ENCODE measurements at regions of chr11 and their contacts with region 1.

Region 1: DNA sequence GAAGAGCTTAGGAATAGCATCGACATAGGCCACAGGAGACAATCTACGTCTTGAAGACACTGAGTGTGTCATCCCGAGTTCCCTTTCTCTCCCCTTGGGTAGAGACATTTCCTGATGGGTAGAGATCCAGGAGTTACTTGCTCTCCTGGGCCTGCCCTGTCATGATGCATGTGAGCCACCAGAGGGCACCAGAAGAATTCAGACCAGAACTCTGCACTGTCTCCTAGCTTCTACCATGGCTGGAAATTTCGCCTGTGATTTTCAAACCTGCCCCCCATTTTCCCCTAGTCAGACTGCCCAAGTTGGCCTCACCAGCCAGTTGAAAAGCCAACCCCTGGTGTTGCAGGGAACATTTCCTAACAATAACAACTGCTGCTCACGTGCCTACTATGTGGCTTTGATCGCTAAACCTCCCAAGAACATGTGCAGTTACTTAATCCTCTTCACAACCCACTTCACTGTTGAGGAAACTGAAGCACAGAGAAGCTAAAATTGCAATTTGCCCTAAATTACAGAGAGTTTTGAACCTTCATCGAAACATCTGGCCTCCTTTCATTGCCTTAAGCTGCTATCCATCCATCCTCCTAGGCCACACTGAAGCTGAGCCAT is 47.2 kb downstream of the C11orf58 start:
- DNase-seq: peak; percentile 72
- H3K4me3 ChIP-seq: no peak overlapping the region
- H3K27ac ChIP-seq: no peak overlapping the region
- H3K4me1 ChIP-seq: no peaks in the 10 kb centered on the region
- H3K27me3 ChIP-seq: no peaks in the 10 kb centered on the region
- CTCF ChIP-seq: peak; percentile 80

Region 2: GRCh38 chr11:15650105-15650938 is 1135.3 kb before region 1 on chr11:
- CTCF ChIA-PET with region 1: no interaction called
- POLR2A ChIA-PET with region 1: no interaction called
- intact Hi-C with region 1: no loop called
- DNase-seq: peak; percentile 92
- H3K4me3 ChIP-seq: peak overlapping the region; percentile 45
- H3K27ac ChIP-seq: peak overlapping the region; percentile 75
- H3K4me1 ChIP-seq: peaks cover 7% of the 10 kb centered on the region
- H3K27me3 ChIP-seq: no peaks in the 10 kb centered on the region
- CTCF ChIP-seq: peak; percentile 93

Region 3: DNA sequence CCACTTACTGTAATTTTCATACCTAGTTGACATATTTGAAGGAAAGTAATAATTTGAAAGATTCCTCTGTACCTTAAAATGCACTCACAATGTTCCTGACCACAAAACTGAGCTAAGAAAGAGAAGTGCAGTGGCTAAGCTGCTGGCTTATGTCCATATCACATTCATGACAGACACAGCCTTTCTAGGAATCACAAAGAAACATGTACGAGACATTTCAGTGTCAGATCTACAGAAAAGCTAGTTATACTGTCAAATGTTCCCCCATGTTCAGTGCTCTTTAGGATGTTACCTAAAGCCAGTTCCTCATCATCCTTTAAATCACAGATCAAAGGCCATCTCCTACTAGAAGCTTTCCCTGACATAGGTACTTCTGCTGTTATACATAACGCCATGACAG is 189.4 kb before region 1 on chr11:
- CTCF ChIA-PET with region 1: no interaction called
- POLR2A ChIA-PET with region 1: interaction called, 12 read pairs
- intact Hi-C with region 1: no loop called
- DNase-seq: no peak
- H3K4me3 ChIP-seq: no peak overlapping the region
- H3K27ac ChIP-seq: no peak overlapping the region
- H3K4me1 ChIP-seq: no peaks in the 10 kb centered on the region
- H3K27me3 ChIP-seq: no peaks in the 10 kb centered on the region
- CTCF ChIP-seq: no peak

Region 4: GRCh38 chr11:16685914-16686313 is 99.7 kb before region 1 on chr11:
- CTCF ChIA-PET with region 1: no interaction called
- POLR2A ChIA-PET with region 1: no interaction called
- intact Hi-C with region 1: no loop called
- DNase-seq: no peak
- H3K4me3 ChIP-seq: no peak overlapping the region
- H3K27ac ChIP-seq: no peak overlapping the region
- H3K4me1 ChIP-seq: no peaks in the 10 kb centered on the region
- H3K27me3 ChIP-seq: no peaks in the 10 kb centered on the region
- CTCF ChIP-seq: no peak

Measured in A673 (cell line).